Left colon (tissue), 2 donors: ENCODE measurements at regions of chr17 and their contacts with region 1.

Region 1: DNA sequence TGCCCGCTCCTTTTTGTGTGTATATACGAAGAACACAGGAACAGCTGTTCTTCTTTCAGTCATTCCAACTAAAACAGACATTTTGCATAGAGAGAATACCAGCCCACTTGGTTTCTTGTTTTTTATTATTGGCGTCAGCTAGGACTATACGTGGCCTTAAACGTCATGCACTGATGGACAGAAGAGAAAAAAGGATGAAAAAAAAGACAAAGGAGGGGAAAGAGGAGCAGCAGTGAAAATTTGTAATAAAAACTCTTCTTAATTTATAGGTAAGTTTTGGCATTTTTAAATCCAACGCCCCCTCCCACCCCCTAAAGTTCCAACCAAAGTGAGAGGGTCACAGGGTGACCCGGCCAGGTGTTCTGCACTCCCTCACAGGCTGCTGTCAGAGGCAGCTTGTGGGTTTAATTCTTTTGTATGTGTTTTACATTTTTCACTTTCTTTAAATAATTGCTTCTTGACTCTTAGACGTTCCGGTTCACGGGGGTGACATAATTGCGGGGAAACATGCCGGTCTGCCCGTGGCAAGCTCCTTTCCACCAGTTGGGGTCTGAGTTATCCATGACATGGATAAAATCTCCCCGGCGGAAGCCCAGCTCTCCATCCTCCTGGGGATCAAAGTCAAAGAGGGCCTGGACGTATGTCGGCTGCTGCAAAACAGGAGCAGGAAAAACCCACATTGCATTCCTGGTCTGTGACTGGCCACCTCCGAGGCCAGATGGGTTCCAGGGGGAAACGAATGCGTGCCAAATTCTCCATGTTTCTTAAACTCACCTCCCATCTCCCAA is 30.9 kb upstream of the SLC25A19 start:
- DNase-seq: no peak
- ATAC-seq: no peak

Region 2: DNA sequence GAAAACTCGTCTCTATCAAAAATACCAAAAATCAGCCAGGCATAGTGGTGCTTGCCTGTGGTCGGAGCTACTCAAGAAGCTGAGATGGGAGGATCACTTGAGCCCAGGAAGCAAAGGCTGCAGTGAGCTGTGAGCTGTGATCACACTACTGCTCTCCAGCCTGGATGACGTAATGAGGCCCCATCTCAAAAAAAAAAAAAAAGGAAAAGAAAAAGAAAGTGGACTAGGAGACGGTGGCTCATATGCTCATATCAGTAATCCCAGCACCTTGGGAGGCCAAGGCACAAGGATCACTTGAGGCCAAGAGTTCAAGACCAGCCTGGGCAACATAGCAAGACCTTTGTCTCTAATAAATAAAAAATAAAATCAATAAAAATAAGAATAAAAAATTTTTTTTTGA is 128.5 kb before region 1 on chr17:
- intact Hi-C with region 1: no loop called
- DNase-seq: no peak
- ATAC-seq: no peak

Region 3: GRCh38 chr17:75405365-75406221 is 85.5 kb after region 1 on chr17 and contains the start of gene GRB2:
- intact Hi-C with region 1: loop called (anchors 2 to 10 kb)
- DNase-seq: peak; percentile 98 to 99
- ATAC-seq: peak; percentile 90
- total RNA-seq, gene GRB2: 112 to 117 TPM